Mammary epithelial cell (primary cell): ENCODE measurements at regions of chr15 and their contacts with region 1.

Region 1: DNA sequence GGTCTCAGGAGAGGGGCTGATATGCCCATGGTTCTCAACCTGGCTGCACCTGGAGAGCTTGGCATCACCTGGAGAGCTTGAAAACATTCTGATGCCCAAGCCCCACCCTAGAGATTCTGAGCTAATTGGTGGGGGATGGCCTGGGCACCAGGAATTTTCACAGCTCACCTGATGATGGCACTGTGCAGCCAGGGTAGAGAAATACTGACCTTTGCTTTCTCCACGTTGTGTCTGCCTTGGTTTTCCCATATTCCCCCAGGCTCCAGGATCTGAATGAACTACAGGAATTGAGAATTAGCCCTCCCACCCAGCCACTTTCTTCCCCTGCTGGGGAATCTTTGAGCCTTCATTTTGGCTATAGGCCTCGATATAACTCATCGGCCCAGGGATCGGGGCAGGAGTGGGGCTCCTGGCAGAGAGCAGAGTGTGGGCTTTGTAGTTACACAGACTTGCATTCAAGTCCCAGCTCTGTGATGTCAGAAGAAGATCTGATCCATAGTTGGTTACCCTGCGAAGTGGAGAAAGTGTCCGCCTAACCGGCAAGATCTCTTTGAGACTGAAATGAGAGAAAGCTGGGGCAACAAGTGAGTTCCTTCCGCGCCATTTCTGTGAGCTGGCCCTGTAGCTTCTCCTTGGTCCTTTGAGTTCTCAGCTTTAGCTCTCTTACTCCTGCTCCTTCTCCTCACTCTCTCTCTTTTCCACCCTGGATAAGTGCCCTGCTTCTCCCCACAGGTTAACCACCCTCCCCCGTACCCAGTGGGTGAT is 33.1 kb upstream of the UBE2Q2 start:
- DNase-seq: peak; percentile 60
- H3K4me3 ChIP-seq: no peak overlapping the region
- H3K27ac ChIP-seq: no peak overlapping the region
- H3K4me1 ChIP-seq: peaks cover 12% of the 10 kb centered on the region
- H3K27me3 ChIP-seq: no peaks in the 10 kb centered on the region
- CTCF ChIP-seq: peak; percentile 65 to 84

Region 2: GRCh38 chr15:75675579-75676404 is 134.4 kb before region 1 on chr15:
- CTCF ChIA-PET with region 1: no interaction called
- dilution Hi-C with region 1: loop called (anchors 5 kb)
- in situ Hi-C with region 1: no loop called
- intact Hi-C with region 1: no loop called
- DNase-seq: no peak
- H3K4me3 ChIP-seq: no peak overlapping the region
- H3K27ac ChIP-seq: no peak overlapping the region
- H3K4me1 ChIP-seq: peaks cover 11% of the 10 kb centered on the region
- H3K27me3 ChIP-seq: no peaks in the 10 kb centered on the region
- CTCF ChIP-seq: no peak

Region 3: GRCh38 chr15:75843802-75844581 is 33.8 kb after region 1 on chr15:
- CTCF ChIA-PET with region 1: no interaction called
- dilution Hi-C with region 1: no loop called
- in situ Hi-C with region 1: no loop called
- intact Hi-C with region 1: loop called (anchors 1 kb)
- DNase-seq: peak; percentile 66
- H3K4me3 ChIP-seq: peak overlapping the region; percentile 79 to 97 (median 86)
- H3K27ac ChIP-seq: peak overlapping the region; percentile 71
- H3K4me1 ChIP-seq: peaks cover 30% of the 10 kb centered on the region
- H3K27me3 ChIP-seq: no peaks in the 10 kb centered on the region
- CTCF ChIP-seq: no peak

Region 4: DNA sequence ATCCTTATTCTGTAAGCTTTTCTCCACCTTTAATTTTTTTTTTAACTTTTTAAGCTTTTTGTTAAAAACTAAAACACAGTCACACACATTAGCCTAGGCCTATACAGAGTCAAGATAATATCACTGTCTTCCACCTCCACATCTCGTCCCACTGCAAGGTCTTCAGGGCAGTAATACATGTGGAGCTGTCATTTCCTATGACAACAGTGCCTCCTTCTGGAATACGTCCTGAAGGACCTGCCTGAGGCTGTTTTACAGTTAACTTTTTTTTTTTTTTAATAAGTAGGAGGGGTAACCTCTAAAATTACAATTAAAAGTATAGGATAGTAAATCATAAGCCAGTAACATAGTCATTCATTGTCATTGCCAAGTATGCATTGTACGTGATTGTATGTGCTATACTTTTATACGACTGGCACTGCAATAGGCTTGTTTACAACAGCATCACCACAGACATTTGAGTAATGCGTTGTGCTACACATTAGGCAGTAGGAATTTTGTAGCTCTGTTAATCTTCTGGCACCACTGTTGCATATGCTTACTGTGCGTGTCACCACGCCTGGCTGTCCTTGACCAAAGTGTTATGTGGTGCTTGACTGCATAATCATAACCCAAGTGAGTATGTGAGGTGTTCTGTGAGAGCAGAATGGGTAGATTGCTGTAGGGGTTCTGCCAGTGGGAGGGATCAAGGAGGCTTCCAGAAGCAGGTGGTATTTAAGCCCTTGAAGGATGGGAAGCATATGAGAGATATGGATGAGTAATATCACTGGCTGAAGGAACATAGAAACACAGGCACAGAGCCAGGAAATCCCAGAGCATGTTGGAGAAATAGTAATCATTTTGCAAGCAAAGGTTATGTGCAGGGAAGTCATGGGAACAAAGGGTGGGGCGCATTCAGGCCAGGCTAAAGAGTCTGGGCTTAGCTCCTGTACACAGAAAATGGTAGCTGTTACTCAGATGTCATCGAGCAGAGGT is 111.8 kb after region 1 on chr15:
- CTCF ChIA-PET with region 1: interaction called, 8 read pairs
- dilution Hi-C with region 1: no loop called
- in situ Hi-C with region 1: loop called in 1 of 2 experiments (anchors 10 kb)
- intact Hi-C with region 1: loop called (anchors 1 kb)
- DNase-seq: peak; percentile 78
- H3K4me3 ChIP-seq: no peak overlapping the region
- H3K27ac ChIP-seq: no peak overlapping the region
- H3K4me1 ChIP-seq: peaks cover 29% of the 10 kb centered on the region
- H3K27me3 ChIP-seq: no peaks in the 10 kb centered on the region
- CTCF ChIP-seq: peak; percentile 32 to 33

Region 5: DNA sequence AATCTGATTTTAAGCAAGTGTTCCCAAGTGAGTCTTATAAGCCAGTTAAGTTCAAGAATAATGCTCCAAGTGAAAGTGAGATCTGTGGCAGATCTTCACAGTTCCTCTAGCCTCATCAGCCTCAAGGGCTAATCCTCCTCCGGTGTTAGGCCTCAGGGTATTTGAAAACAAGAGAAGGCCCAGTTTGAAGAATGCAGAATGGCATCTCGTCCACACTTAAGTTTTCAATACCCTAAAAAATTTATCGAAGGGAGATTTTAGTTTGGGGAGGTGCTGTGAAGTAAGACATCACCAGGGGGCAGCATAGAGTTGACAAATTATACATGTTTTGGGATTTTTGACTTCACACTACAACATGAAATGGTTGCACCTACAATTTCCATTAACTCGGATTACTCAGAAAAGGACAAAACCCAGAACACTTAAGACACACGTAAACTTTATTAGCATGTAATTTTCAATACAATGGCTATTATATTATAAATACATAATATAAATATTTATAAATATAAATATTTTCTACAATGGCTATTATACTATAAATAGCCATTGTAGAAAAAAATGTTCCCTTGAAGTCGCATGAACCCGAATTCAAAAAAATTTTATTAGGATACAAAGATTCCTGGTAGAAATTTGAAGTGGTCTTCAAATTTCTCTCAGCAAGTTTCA is 247.3 kb after region 1 on chr15:
- CTCF ChIA-PET with region 1: interaction called, 7 read pairs
- dilution Hi-C with region 1: no loop called
- in situ Hi-C with region 1: no loop called
- intact Hi-C with region 1: loop called (anchors 1 kb)
- DNase-seq: peak; percentile 26
- H3K4me3 ChIP-seq: peak overlapping the region; percentile 30 to 61 (median 43)
- H3K27ac ChIP-seq: no peak overlapping the region
- H3K4me1 ChIP-seq: peaks cover 18% of the 10 kb centered on the region
- H3K27me3 ChIP-seq: peaks cover 9% of the 10 kb centered on the region
- CTCF ChIP-seq: peak; percentile 76

Region 6: DNA sequence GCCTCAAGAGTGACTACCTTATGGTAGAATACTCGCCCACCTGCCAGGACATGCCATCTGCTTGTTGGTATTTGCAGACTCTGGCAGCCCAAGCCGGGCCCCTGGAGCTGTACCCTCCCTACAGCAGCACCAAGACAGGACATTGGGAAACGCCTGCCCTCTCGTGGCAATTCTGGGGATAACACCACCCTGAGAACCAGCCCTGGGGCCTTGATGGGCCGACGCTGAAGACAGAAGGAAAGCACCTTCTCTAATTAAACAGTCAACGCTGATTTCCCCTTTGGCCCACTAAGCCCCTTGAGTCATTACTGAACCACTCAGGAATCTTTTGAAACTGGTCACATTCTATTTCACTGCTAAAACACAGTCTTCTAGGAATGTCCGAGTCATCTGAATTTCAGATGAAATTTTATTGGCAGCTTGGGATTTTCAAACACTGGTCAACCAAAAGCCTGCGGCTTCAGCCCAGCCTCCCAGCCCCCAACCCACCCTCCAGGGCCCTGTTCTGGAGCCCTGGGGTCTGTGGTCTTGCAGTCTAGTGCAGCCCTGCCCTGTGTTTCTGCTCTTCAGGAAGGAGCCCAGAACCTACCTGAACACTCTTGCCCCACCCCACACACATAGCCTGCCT is 340.9 kb after region 1 on chr15:
- CTCF ChIA-PET with region 1: interaction called, 3 read pairs
- dilution Hi-C with region 1: no loop called
- in situ Hi-C with region 1: loop called in 1 of 2 experiments (anchors 10 kb)
- intact Hi-C with region 1: loop called (anchors 1 kb)
- DNase-seq: peak; percentile 91
- H3K4me3 ChIP-seq: no peak overlapping the region
- H3K27ac ChIP-seq: peak overlapping the region; percentile 36
- H3K4me1 ChIP-seq: peaks cover 18% of the 10 kb centered on the region
- H3K27me3 ChIP-seq: no peaks in the 10 kb centered on the region
- CTCF ChIP-seq: peak; percentile 74 to 92